A673 (cell line): ENCODE measurements at regions of chr2 and their contacts with region 1.

Region 1: GRCh38 chr2:67733517-67733916 is 329.3 kb downstream of the C1D start:
- DNase-seq: peak; percentile 73
- H3K4me3 ChIP-seq: no peak overlapping the region
- H3K27ac ChIP-seq: no peak overlapping the region
- H3K4me1 ChIP-seq: no peaks in the 10 kb centered on the region
- H3K27me3 ChIP-seq: no peaks in the 10 kb centered on the region
- CTCF ChIP-seq: peak; percentile 75

Region 2: GRCh38 chr2:67329513-67329912 is 404.0 kb before region 1 on chr2:
- CTCF ChIA-PET with region 1: no interaction called
- POLR2A ChIA-PET with region 1: no interaction called
- intact Hi-C with region 1: no loop called
- DNase-seq: no peak
- H3K4me3 ChIP-seq: no peak overlapping the region
- H3K27ac ChIP-seq: no peak overlapping the region
- H3K4me1 ChIP-seq: no peaks in the 10 kb centered on the region
- H3K27me3 ChIP-seq: no peaks in the 10 kb centered on the region
- CTCF ChIP-seq: no peak

Region 3: GRCh38 chr2:67840460-67841068 is 107.0 kb after region 1 on chr2:
- CTCF ChIA-PET with region 1: interaction called, 18 read pairs
- POLR2A ChIA-PET with region 1: interaction called, 3 read pairs
- intact Hi-C with region 1: loop called (anchors 1 kb)
- DNase-seq: peak; percentile 88
- H3K4me3 ChIP-seq: no peak overlapping the region
- H3K27ac ChIP-seq: no peak overlapping the region
- H3K4me1 ChIP-seq: peaks cover 16% of the 10 kb centered on the region
- H3K27me3 ChIP-seq: no peaks in the 10 kb centered on the region
- CTCF ChIP-seq: peak; percentile 96

Region 4: DNA sequence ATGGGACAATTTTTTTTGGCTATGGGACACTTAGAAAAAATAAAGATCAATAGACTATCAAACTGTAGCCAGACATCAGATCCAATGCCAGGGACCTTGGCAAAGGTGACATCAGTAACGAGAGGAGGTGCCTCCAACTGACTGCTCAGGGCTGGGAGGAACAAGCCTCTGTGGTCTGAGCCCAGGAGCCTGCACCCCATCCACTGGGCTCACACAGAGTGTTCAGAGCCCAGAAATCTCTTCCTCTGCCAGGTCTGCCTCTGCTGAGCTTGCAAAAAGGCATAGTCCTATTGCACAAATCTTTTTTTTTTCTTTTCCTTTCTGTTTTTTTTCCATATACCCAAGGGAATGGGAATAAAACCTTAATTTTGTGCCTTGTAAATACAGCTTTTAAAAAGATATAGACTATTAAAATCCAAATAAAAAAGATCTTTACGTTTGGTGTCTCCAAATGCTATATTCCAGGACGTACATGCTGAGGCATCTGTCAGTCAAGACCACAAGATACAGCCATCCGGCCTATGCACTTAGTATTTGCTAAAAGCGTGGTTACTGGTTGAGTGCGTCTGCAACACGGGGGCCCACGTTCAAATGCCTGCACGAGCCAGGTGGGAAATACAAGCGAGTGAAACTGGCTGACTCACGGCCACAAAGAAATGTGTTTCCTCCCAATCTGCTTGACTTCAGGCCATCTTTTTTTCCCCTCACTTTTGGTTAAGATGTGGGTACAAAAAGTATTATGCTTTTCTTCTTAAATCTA is 993.3 kb after region 1 on chr2:
- CTCF ChIA-PET with region 1: no interaction called
- POLR2A ChIA-PET with region 1: no interaction called
- intact Hi-C with region 1: no loop called
- DNase-seq: no peak
- H3K4me3 ChIP-seq: no peak overlapping the region
- H3K27ac ChIP-seq: no peak overlapping the region
- H3K4me1 ChIP-seq: peaks cover 3% of the 10 kb centered on the region
- H3K27me3 ChIP-seq: no peaks in the 10 kb centered on the region
- CTCF ChIP-seq: no peak